ENCODE measurements at regions of chr3 and their contacts with region 1.

Region 1: GRCh38 chr3:4350789-4351163 is 47.6 kb downstream of the SETMAR start:
- DNase-seq: peak in 4 of 5 donors; percentile 43 to 89 (median 62)
- H3K4me3 ChIP-seq: no peak overlapping the region
- H3K27ac ChIP-seq: no peak overlapping the region
- H3K4me1 ChIP-seq: peaks cover 4 to 6% (median 4%) of the 10 kb centered on the region in 3 donors
- H3K27me3 ChIP-seq: no peaks in the 10 kb centered on the region
- CTCF ChIP-seq: peak; percentile 75

Region 2: DNA sequence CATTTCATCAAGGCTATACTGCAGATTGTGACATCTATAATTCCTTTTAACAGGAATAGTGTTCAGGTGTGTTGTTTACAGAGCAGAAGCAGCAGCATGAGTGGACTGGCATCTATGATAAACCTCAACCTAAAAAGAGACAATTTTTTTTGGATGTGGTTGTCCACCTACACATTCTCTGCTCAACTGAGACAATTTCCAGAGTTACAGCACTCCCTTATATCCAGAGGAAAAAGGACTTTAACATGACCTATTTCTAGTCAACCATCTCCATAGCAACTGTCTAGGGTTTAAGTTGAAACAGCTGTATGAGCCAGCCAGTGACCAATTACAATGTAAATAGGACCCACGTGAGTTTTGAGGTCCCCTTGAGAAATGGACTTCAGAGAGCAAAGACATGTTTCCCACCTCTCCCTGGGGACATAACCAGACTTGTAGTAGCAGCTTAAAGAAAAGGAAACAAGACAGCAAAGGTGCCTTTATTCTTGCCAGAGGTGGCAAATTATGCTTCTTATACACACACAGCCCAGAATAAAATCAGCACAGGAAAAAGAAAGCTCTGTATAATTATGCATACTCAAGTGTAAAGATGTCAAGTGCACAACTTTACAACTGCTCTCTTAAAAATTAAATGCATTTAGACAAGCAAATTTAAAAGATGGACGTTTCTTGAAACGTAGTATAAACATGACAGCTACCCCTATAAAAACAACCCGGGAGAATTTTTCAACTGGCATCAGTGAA is 76.0 kb after region 1 on chr3:
- intact Hi-C with region 1: no loop called
- DNase-seq: peak in 3 of 5 donors; percentile 61 to 94 (median 90)
- H3K4me3 ChIP-seq: no peak overlapping the region
- H3K27ac ChIP-seq: no peak overlapping the region
- H3K4me1 ChIP-seq: peaks cover 2 to 3% (median 3%) of the 10 kb centered on the region in 3 donors
- H3K27me3 ChIP-seq: no peaks in the 10 kb centered on the region
- CTCF ChIP-seq: no peak

Region 3: GRCh38 chr3:4438293-4438692 is 87.5 kb after region 1 on chr3:
- intact Hi-C with region 1: no loop called
- DNase-seq: no peak
- H3K4me3 ChIP-seq: no peak overlapping the region
- H3K27ac ChIP-seq: no peak overlapping the region
- H3K4me1 ChIP-seq: no peaks in the 10 kb centered on the region
- H3K27me3 ChIP-seq: no peaks in the 10 kb centered on the region
- CTCF ChIP-seq: no peak

Region 4: DNA sequence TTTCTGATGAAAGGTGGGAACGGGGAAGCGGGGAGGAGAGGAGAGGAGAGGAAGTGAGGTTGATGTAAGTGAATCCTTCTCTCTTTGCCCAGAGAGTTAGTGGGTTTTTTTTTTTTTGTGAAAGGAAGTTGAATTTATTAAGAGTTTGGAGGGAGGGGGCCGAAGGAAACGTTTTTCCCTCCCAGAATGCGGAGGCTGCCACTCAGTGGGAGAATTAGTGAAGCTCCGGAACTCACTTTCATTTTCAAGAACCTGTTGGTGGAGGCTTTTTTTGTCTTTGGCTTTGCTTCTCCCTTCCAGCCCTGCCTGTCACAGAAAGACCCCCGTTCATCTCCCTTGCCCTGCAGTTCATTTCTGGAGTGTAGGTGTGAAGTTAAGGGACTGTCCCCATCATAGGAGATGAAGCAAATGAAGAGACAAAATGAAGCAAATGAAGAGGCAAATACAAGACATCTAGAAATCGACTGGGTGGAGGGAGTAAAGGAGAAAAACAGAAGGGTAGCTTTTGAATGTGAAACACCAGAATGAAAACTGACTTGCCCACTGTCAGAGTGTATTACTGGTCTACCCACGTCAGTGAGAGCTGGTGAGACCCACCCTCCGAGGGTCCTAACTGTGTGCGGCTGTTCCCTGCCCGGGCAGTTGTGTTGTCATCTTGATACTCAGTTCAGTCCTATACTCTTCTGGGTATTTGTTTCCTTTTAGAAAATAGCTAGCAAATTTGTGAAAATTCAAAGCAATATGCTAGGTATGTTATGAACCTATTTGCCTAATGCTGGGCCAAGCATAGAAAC is 233.9 kb after region 1 on chr3:
- intact Hi-C with region 1: loop called (anchors 5 kb)
- DNase-seq: peak in 2 of 5 donors; percentile 44 to 83
- H3K4me3 ChIP-seq: peak overlapping the region in 2 of 3 donors; percentile 41 to 56
- H3K27ac ChIP-seq: peak overlapping the region; percentile 36 to 82
- H3K4me1 ChIP-seq: peaks cover 15 to 19% (median 16%) of the 10 kb centered on the region in 3 donors
- H3K27me3 ChIP-seq: no peaks in the 10 kb centered on the region
- CTCF ChIP-seq: peak; percentile 42

Region 5: GRCh38 chr3:4633078-4634004 is 282.6 kb after region 1 on chr3:
- intact Hi-C with region 1: loop called (anchors 10 kb)
- DNase-seq: peak in 2 of 5 donors; percentile 86
- H3K4me3 ChIP-seq: no peak overlapping the region
- H3K27ac ChIP-seq: no peak overlapping the region
- H3K4me1 ChIP-seq: peaks cover 0 to 3% (median 0%) of the 10 kb centered on the region in 3 donors
- H3K27me3 ChIP-seq: no peaks in the 10 kb centered on the region
- CTCF ChIP-seq: peak; percentile 79

Measured in kidney (tissue), 22 donors.